ENCODE measurements at regions of chr16 and their contacts with region 1.

Region 1: GRCh38 chr16:47141773-47142485 is 1.8 kb downstream of the NETO2 start:
- DNase-seq: peak; percentile 89
- ATAC-seq: peak; percentile 67
- H3K4me3 Mint-ChIP-seq: peak overlapping the region; percentile 69
- H3K27ac Mint-ChIP-seq: peak overlapping the region; percentile 37
- H3K4me1 Mint-ChIP-seq: peaks cover 23% of the 10 kb centered on the region
- H3K27me3 Mint-ChIP-seq: peaks cover 31% of the 10 kb centered on the region

Region 2: GRCh38 chr16:47037746-47038458 is 104.0 kb before region 1 on chr16:
- CTCF ChIA-PET with region 1: interaction called, 21 read pairs
- POLR2A ChIA-PET with region 1: no interaction called
- DNase-seq: peak; percentile 90
- ATAC-seq: peak; percentile 97
- H3K4me3 Mint-ChIP-seq: peak overlapping the region; percentile 74
- H3K27ac Mint-ChIP-seq: no peak overlapping the region
- H3K4me1 Mint-ChIP-seq: peaks cover 4% of the 10 kb centered on the region
- H3K27me3 Mint-ChIP-seq: peaks cover 12% of the 10 kb centered on the region

Region 3: DNA sequence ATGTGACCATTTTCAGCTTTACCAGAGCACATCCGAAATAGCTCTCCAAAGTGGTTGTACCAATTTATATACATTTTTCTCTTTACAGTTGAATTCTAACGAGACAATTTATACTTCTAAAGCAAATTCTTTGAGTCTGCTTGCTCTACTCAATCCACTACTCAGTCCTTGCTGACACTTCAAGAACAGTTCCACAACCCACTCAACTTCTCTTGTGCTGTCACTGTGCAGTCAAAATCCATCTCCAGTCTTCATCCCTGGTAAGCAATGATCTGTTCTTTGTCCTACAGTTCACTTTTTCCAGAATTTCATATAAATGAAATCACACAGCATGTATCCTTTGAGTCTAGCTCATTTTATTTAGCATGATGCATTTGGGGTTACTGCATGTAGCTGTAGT is 28.8 kb before region 1 on chr16:
- CTCF ChIA-PET with region 1: interaction called, 15 read pairs
- POLR2A ChIA-PET with region 1: no interaction called
- DNase-seq: no peak
- ATAC-seq: no peak
- H3K4me3 Mint-ChIP-seq: no peak overlapping the region
- H3K27ac Mint-ChIP-seq: no peak overlapping the region
- H3K4me1 Mint-ChIP-seq: peaks cover 4% of the 10 kb centered on the region
- H3K27me3 Mint-ChIP-seq: no peaks in the 10 kb centered on the region

Region 4: DNA sequence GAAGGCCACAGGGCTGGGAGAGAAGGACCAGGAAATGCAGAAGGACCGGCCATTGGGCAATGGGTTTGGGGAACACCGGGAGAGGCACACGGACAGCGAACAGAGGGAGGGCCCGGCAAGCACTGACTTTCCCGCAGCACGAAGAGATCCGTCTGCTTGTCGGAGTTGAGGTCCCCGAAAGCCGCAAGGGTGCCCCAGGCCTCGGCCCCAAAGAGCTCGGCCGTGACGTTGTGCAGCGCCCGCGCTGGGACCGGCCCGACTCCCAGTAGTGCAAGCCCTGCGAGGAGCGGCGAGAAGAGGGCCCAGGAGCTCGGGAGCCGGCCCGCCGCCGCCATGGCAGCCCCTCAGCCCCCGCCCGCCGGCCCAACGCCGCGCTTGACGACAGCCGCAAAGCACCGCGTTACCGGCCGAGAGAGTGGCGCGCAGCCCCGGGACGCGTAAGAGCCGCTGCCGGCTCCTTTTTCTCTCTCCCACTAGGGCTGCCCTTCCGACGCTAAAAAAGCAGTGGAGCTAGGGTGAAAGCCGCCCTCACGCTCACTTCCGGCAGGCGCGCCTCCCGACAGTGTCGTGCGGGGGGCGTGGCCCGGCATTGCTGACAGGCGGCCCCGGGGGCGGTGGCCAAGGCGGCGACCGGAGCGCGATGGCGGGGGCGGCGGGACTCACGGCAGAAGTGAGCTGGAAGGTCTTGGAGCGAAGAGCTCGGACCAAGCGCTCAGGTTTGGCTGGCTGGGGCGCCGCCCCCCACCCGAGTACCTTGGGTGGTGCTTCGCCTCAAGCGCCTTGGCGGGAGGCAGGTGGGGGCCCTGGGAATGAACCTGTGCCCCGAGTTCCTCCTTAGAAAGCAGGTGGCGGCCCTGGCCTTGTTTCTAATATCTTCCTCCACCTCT is 319.0 kb after region 1 on chr16 and contains the starts of genes ITFG1 and PHKB:
- CTCF ChIA-PET with region 1: interaction called, 23 read pairs
- POLR2A ChIA-PET with region 1: no interaction called
- DNase-seq: peak; percentile 95
- ATAC-seq: peak; percentile 97
- H3K4me3 Mint-ChIP-seq: peak within 1 kb of the TSS; percentile 87
- H3K27ac Mint-ChIP-seq: peak within 1 kb of the TSS; percentile 94
- H3K4me1 Mint-ChIP-seq: peaks cover 42% of the 10 kb centered on the region
- H3K27me3 Mint-ChIP-seq: no peaks in the 10 kb centered on the region
- total RNA-seq, gene ITFG1: 21.9 to 24.4 TPM
- total RNA-seq, gene PHKB: 34.9 to 36.8 TPM

Region 5: DNA sequence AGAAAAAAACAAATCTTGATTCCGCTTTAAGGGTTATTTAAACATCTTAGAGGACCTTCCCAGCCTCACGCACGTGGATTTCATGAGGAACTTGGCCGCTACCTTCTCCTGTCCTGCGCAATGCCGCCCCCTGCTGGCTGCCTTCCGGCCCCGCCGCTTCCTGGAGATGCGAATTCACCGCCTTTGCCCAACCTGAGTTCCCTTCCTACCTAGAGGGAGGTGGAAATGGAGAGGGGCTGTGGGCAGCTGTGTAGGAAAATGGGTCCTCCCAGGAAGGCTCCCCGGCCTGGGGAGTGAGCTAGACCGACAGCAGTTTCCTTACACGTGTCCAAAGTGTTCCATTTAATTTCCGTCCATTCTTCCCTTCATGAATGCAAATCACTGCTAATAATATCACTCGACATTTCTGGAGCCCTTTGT is 1014.9 kb after region 1 on chr16:
- CTCF ChIA-PET with region 1: interaction called, 33 read pairs
- POLR2A ChIA-PET with region 1: no interaction called
- DNase-seq: peak; percentile 83
- ATAC-seq: peak; percentile 72
- H3K4me3 Mint-ChIP-seq: no peak overlapping the region
- H3K27ac Mint-ChIP-seq: no peak overlapping the region
- H3K4me1 Mint-ChIP-seq: peaks cover 14% of the 10 kb centered on the region
- H3K27me3 Mint-ChIP-seq: peaks cover 10% of the 10 kb centered on the region

Measured in activated CD8-positive, alpha-beta T cell treated with anti-CD3 and anti-CD28 coated beads, Interleukin-2, amount 10 ng/mL, durations not matched to agents 7 days and 5 days (primary cell).